Right ventricle myocardium superior (tissue), 1 donor: ENCODE measurements at regions of chr6 and their contacts with region 1.

Region 1: GRCh38 chr6:47631269-47631772 is 67.1 kb upstream of the ADGRF4 start:
- DNase-seq: no peak
- ATAC-seq: peak; percentile 74

Region 2: GRCh38 chr6:47434372-47435253 is 196.7 kb before region 1 on chr6:
- intact Hi-C with region 1: no loop called
- DNase-seq: no peak
- ATAC-seq: no peak

Region 3: DNA sequence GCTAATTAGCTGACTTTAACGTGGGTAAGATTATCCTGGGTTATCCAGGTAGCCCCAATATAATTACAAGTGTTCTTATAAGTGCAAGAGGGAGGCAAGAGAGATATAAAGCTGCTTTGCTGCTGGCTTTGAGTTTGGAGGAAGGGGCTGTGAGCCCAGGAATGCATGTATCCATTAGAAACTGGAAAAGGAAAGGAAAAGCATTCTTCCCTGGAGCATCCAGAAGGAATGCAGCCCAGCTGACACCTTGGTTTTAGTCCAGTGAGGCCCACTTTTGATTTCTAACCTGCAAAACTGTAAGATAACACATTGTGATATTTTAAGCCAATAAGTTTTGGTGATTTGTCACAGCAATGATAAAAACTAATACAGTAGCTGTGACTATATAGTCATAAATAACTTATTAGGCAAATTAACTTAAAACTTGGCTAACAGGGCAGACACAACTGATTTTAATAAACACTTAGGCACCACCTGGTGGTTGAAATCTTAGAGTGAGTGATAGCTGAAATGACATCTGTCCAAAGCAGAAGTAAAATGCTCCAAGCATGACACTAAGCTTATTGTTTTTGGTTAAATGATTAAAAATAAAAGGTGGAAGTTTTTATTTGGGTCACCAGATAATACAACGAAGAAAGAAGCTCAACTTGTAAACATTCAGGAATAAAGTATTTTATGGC is 102.7 kb after region 1 on chr6:
- intact Hi-C with region 1: loop called (anchors 5 kb)
- DNase-seq: no peak
- ATAC-seq: no peak

Region 4: GRCh38 chr6:47780510-47781356 is 149.4 kb after region 1 on chr6:
- intact Hi-C with region 1: loop called (anchors 2 kb)
- DNase-seq: no peak
- ATAC-seq: peak; percentile 87